PC-9 (cell line): ENCODE measurements at regions of chr11 and their contacts with region 1.

Region 1: GRCh38 chr11:65888163-65888814 is at the start of gene FIBP:
- DNase-seq: peak; percentile 92 to 97
- H3K4me3 ChIP-seq: peak within 1 kb of the TSS; percentile 80
- H3K27ac ChIP-seq: peak within 1 kb of the TSS; percentile 51
- H3K4me1 ChIP-seq: peaks cover 28% of the 10 kb centered on the region
- H3K27me3 ChIP-seq: no peaks in the 10 kb centered on the region
- CTCF ChIP-seq: peak; percentile 90
- total RNA-seq, gene FIBP: 105 and 141 TPM in 2 replicates

Region 2: DNA sequence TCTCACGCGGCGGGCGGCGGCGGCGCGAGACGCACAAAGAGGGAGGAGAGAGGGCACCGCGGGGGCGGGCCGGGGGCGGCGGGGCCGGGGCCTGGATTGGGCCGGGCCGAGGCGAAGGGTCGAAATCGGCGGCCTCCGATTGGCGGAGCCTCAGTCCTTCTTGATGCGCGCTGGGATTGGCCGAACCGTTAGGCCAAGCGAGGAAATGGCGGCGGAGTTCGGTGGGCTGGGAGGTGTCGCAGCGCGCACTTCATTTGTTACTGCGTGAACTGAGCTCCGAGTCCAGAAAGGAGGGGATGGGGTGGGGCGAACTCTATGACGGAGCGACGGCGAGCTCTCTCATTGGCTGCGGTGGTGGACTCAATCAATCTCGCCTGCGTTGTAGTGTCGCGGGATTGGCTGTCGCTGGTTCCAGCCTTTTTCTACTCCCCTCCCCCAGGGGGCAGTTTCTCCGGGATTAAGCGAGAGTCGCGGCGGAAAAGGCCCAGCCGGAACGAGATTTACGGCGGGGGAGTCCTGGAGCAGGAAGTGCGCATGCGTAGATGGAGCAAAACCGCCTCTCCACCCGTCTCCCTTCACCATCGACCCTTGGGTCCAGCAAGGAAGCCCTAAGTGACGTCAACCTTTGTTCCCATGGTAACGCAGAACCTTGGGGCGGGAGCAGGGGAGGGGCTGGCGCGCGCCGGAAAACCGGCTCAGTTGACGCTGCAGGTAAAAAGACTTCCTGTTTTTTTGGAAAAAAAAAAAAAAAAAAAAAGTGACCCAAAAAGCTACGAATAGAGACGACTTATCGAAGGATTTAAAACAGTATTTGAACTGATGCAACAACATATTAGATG is 1109.6 kb before region 1 on chr11 and contains the start of gene SF1:
- CTCF ChIA-PET with region 1: no interaction called
- POLR2A ChIA-PET with region 1: interaction called, 10 read pairs
- intact Hi-C with region 1: no loop called
- DNase-seq: peak; percentile 100
- H3K4me3 ChIP-seq: peak within 1 kb of the TSS; percentile 98
- H3K27ac ChIP-seq: peak within 1 kb of the TSS; percentile 86
- H3K4me1 ChIP-seq: peaks cover 26% of the 10 kb centered on the region
- H3K27me3 ChIP-seq: no peaks in the 10 kb centered on the region
- CTCF ChIP-seq: 0 out of 2 replicates have a peak, but pooled peaks have one; percentile 2
- total RNA-seq, gene SF1: 253 and 336 TPM in 2 replicates

Region 3: GRCh38 chr11:65662799-65663638 is 225.3 kb before region 1 on chr11 and contains the start of gene RELA:
- CTCF ChIA-PET with region 1: interaction called, 9 read pairs
- POLR2A ChIA-PET with region 1: interaction called, 19 read pairs
- intact Hi-C with region 1: no loop called
- DNase-seq: peak; percentile 76 to 98
- H3K4me3 ChIP-seq: peak within 1 kb of the TSS; percentile 99
- H3K27ac ChIP-seq: peak within 1 kb of the TSS; percentile 80
- H3K4me1 ChIP-seq: peaks cover 20% of the 10 kb centered on the region
- H3K27me3 ChIP-seq: no peaks in the 10 kb centered on the region
- CTCF ChIP-seq: no peak
- total RNA-seq, gene RELA: 59.5 and 86.8 TPM in 2 replicates

Region 4: GRCh38 chr11:65834800-65835199 is 53.5 kb before region 1 on chr11:
- CTCF ChIA-PET with region 1: no interaction called
- POLR2A ChIA-PET with region 1: no interaction called
- intact Hi-C with region 1: no loop called
- DNase-seq: no peak
- H3K4me3 ChIP-seq: no peak overlapping the region
- H3K27ac ChIP-seq: no peak overlapping the region
- H3K4me1 ChIP-seq: no peaks in the 10 kb centered on the region
- H3K27me3 ChIP-seq: peaks cover 44% of the 10 kb centered on the region
- CTCF ChIP-seq: no peak

Region 5: DNA sequence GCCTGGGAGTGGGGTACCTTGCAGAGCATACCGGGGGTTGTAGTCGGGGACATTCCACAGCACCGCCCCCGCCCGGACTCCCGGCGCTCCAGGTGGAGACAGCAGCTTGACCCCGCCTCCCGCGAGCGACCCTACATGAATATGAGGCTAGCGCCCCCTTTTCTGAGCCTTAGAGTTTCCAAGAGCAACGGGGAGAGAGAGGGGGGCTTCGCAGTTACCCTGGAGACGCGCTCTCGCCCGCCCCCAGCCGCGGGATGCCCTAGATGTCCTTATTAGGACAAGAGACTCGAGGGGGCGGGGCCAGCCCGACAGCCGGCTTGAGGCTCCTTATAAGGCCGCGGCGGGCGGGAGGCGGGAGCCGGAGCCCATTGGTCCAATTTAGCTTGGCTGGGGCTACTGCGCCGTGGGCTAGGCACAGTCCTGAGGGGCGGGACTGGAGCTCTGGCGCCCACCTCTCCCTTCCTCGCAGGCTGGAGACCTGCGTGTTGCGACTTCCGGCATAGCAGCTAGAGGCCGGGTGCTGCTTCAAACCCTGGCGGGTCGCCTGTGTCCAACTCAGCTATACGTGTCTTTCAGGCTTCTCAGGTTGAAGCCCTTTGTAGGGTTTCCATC is 29.0 kb before region 1 on chr11:
- CTCF ChIA-PET with region 1: interaction called, 24 read pairs
- POLR2A ChIA-PET with region 1: interaction called, 29 read pairs
- intact Hi-C with region 1: loop called (anchors 1 kb)
- DNase-seq: peak; percentile 96 to 99
- H3K4me3 ChIP-seq: peak overlapping the region; percentile 96
- H3K27ac ChIP-seq: peak overlapping the region; percentile 79
- H3K4me1 ChIP-seq: peaks cover 21% of the 10 kb centered on the region
- H3K27me3 ChIP-seq: no peaks in the 10 kb centered on the region
- CTCF ChIP-seq: peak; percentile 38; the same call in 1 of the 2 replicates

Region 6: DNA sequence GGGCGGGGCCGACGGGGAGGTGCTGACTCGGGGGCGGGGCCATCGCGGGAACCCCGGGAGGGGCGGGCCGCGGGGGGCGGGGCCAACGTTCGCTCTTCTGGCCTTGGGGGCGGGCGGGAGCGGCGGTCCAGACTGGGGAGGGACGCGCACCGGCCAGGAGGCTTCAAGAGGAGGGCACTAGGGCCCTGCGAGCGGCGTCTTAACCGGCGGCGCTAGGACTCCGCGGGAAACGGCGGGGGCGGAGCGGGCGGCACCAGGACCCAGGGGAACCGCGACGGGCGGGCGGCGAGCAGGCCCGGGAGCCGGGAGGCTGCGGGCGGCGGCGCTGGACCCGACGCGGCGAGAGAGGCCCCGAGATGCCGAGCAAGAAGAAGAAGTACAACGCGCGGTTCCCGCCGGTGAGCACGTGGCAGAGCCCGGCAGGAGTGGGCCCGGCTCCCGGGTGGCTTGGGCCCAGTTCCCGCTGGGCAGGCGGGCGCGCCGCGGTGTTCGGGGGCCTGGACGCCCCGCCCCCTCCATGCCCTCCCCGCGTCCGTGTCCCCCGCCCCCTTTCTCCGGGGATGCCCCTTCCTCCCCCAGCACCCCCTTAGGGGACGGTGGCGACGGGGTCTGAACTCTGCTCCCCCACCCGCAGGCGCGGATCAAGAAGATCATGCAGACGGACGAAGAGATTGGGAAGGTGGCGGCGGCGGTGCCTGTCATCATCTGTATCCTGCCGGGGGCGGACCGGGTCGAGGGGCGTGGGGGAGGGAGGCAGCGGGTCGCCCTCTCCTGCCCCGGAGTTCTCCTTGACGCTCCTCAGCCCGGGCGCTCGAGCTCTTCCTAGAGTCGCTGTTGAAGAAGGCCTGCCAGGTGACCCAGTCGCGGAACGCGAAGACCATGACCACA is 31.1 kb after region 1 on chr11 and contains the start of gene DRAP1:
- CTCF ChIA-PET with region 1: interaction called, 9 read pairs
- POLR2A ChIA-PET with region 1: interaction called, 25 read pairs
- intact Hi-C with region 1: loop called (anchors 1 kb)
- DNase-seq: peak; percentile 91 to 99
- H3K4me3 ChIP-seq: peak within 1 kb of the TSS; percentile 89
- H3K27ac ChIP-seq: peak within 1 kb of the TSS; percentile 90
- H3K4me1 ChIP-seq: peaks cover 48% of the 10 kb centered on the region
- H3K27me3 ChIP-seq: no peaks in the 10 kb centered on the region
- CTCF ChIP-seq: no peak
- total RNA-seq, gene DRAP1: 196 and 220 TPM in 2 replicates

Region 7: GRCh38 chr11:66001942-66002647 is 113.8 kb after region 1 on chr11 and contains the starts of genes BANF1 and EIF1AD:
- CTCF ChIA-PET with region 1: no interaction called
- POLR2A ChIA-PET with region 1: interaction called, 12 read pairs
- intact Hi-C with region 1: no loop called
- DNase-seq: peak; percentile 94 to 97
- H3K4me3 ChIP-seq: peak within 1 kb of the TSS; percentile 90
- H3K27ac ChIP-seq: peak within 1 kb of the TSS; percentile 78
- H3K4me1 ChIP-seq: peaks cover 14% of the 10 kb centered on the region
- H3K27me3 ChIP-seq: no peaks in the 10 kb centered on the region
- CTCF ChIP-seq: no peak
- total RNA-seq, gene BANF1: 386 and 513 TPM in 2 replicates
- total RNA-seq, gene EIF1AD: 42.9 and 55.2 TPM in 2 replicates